HCT116 (cell line): ENCODE measurements at regions of chr6 and their contacts with region 1.

Region 1: GRCh38 chr6:121055572-121056163 is 278.6 kb downstream of the TBC1D32 start:
- DNase-seq: peak; percentile 10
- ATAC-seq: peak; percentile 87
- H3K4me3 ChIP-seq: no peak overlapping the region
- H3K27ac ChIP-seq: no peak overlapping the region
- H3K4me1 ChIP-seq: no peaks in the 10 kb centered on the region
- H3K27me3 ChIP-seq: no peaks in the 10 kb centered on the region
- CTCF ChIP-seq: peak; percentile 64 to 74 (median 66)
- POLR2A ChIP-seq: no peak
- RAD21 ChIP-seq: peak; percentile 80

Region 2: GRCh38 chr6:121305957-121306607 is 250.4 kb after region 1 on chr6:
- CTCF ChIA-PET with region 1: interaction called, 12 read pairs
- POLR2A ChIA-PET with region 1: no interaction called
- RAD21 ChIA-PET with region 1: no interaction called
- intact Hi-C with region 1: loop called (anchors 1 kb)
- DNase-seq: peak; percentile 35
- ATAC-seq: peak; percentile 78
- H3K4me3 ChIP-seq: no peak overlapping the region
- H3K27ac ChIP-seq: no peak overlapping the region
- H3K4me1 ChIP-seq: no peaks in the 10 kb centered on the region
- H3K27me3 ChIP-seq: no peaks in the 10 kb centered on the region
- CTCF ChIP-seq: peak; percentile 48 to 72 (median 57); a peak in 5 of 6 replicates
- POLR2A ChIP-seq: no peak
- RAD21 ChIP-seq: peak; percentile 70

Region 3: DNA sequence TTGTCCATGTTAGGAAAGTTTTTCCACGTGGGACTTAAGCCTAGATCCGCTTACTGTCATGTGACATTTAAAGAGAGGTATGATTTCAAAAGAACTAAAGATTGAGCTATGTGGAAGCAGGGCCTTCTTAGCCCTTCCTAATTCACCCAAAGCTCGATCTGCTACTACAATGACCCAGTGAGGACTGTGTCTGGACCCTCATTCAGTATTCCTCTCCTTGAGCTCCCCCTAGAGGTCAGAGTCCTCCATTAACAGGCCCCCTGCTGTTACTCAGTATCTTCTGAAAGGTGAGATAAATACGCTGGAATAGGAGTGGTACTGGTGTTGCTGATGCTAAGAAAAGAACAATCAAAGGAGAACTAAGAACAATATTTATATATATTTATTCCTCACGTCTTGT is 793.8 kb after region 1 on chr6:
- CTCF ChIA-PET with region 1: no interaction called
- POLR2A ChIA-PET with region 1: no interaction called
- RAD21 ChIA-PET with region 1: no interaction called
- intact Hi-C with region 1: loop called (anchors 5 kb)
- DNase-seq: peak; percentile 53
- ATAC-seq: peak; percentile 93
- H3K4me3 ChIP-seq: no peak overlapping the region
- H3K27ac ChIP-seq: no peak overlapping the region
- H3K4me1 ChIP-seq: no peaks in the 10 kb centered on the region
- H3K27me3 ChIP-seq: no peaks in the 10 kb centered on the region
- CTCF ChIP-seq: peak; percentile 75 to 87 (median 77); a peak in 5 of 6 replicates
- POLR2A ChIP-seq: no peak
- RAD21 ChIP-seq: peak; percentile 92

Region 4: GRCh38 chr6:122184401-122184827 is 1128.7 kb after region 1 on chr6:
- CTCF ChIA-PET with region 1: no interaction called
- POLR2A ChIA-PET with region 1: no interaction called
- RAD21 ChIA-PET with region 1: no interaction called
- intact Hi-C with region 1: loop called (anchors 10 kb)
- DNase-seq: peak; percentile 19
- ATAC-seq: peak; percentile 79
- H3K4me3 ChIP-seq: no peak overlapping the region
- H3K27ac ChIP-seq: no peak overlapping the region
- H3K4me1 ChIP-seq: no peaks in the 10 kb centered on the region
- H3K27me3 ChIP-seq: no peaks in the 10 kb centered on the region
- CTCF ChIP-seq: peak; percentile 12 to 48 (median 40); a peak in 4 of 6 replicates
- POLR2A ChIP-seq: no peak
- RAD21 ChIP-seq: peak; percentile 71